ENCODE measurements at regions of chr1 and their contacts with region 1.

Region 1: GRCh38 chr1:235415008-235415904 is 48.0 kb downstream of the TBCE start:
- DNase-seq: peak; percentile 54
- ATAC-seq: peak; percentile 74

Region 2: DNA sequence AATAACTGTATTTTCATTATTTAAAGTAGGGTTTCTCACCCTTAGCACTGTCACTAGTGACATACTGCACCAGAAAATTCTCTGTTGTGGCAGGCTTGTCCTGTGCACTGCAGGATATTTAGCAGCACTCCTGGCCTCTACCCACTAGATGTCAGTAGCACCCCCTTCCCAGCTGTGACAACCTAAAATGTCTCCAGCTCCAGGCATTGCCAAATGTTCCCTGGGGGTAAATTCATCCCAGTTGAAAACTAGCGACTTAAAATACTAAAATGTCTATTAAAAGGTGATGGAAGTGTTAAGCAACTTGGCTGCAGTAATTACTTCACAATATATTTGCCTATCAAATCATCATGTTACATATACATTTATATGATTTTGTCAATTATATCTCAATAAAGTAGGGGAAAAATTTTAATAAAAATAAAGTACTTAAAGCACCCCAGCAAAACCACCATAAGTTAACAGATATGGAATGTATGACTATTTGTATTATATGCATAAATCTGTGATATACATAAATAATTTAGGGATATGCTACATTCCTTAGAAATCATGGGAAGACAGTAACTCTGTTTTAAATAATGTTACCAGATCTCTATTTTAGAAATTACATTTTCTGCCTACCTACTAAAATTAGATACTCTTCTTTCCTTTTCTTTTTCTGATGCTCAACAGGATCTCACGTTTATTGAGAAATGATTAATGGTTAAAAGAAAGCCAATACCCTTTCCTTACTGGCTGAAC is 161.9 kb before region 1 on chr1:
- intact Hi-C with region 1: loop called (anchors 1 kb)
- DNase-seq: peak; percentile 34
- ATAC-seq: peak; percentile 91

Region 3: DNA sequence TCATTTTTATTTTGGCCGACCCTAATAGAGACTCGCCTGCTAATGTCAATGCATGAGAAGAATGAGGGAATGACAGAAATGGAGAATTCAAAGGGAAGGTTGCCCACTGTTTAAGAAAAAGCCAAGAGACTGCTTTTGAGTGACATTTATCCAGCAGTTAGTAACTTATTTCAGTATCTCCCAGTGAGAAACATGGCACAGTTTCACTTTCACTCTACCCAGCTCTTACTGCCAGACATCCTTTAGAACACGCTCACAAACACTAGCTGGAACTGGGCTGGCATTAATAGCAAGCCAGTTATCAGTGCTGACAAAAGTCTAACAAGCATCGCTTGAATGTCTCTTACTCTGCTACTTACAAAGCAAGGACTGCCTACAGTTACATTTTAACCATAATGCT is 78.4 kb before region 1 on chr1:
- intact Hi-C with region 1: loop called (anchors 10 kb)
- DNase-seq: no peak
- ATAC-seq: peak; percentile 96

Region 4: DNA sequence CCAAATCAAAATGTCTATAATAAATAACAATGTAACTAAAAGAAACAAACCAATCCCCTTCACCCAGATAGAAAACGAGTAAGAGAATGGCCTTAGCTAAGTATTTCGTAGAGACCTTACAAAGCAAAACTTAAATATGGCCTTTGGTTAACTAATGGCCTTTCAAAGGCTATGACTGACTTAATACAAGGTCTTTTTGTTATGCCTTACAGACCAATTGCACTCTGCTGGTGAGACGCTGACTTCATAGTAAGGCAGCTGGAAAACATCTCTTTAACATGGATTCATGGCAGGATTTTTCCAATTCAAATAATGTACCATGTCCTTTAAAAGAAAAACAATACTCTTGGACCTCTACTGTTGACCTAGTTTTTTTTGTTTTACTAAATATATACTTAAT is 63.8 kb before region 1 on chr1:
- intact Hi-C with region 1: no loop called
- DNase-seq: no peak
- ATAC-seq: no peak

Measured in left ventricle myocardium superior (tissue), 1 donor.